Transverse colon (tissue), 4 donors: ENCODE measurements at regions of chr14 and their contacts with region 1.

Region 1: DNA sequence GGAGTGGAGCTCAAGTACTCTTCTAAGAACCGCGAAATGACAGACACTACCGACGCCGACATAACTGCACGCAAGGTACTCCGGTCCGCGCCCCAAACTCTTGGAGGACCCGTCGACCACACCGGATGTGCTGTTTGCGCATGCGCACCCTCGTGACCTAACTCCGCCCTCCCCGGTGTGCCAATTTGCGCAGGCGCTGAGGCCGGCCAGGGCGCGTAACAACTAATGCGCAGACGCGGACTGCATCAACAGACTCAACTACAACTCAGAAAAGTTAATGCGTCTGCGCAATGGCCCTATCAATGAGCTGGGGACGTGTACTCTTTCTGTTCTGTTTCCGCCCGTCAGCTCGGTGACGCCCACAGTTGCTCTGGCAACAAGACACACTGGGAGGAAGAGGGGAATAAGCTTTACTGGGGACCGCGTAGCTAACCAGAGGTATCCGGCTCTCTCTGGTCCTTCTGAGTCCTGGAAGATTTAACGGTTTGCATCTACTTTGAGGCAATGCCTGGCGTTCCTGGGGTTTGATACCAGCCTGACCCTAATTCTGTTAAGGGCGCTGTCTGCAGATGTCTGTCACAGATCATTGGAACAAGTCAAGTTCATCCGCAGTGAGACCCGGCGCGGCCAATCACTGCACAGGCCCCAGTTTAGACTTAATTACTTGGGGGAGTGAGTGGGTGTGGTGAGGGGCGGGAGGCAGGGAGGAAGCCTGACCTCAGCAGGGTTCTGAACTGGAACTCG is at the start of gene DAD1:
- DNase-seq: peak; percentile 99
- H3K4me3 ChIP-seq: peak within 1 kb of the TSS; percentile 70 to 85 (median 78)
- H3K27ac ChIP-seq: peak within 1 kb of the TSS; percentile 90 to 98 (median 92)
- H3K4me1 ChIP-seq: peaks cover 19 to 62% (median 35%) of the 10 kb centered on the region in 4 donors
- H3K27me3 ChIP-seq: no peaks in the 10 kb centered on the region
- CTCF ChIP-seq: no peak
- EP300 ChIP-seq: no peak
- POLR2A ChIP-seq: peak; percentile 93
- total RNA-seq, gene DAD1: 31.4 to 154 (median 141) TPM

Region 2: DNA sequence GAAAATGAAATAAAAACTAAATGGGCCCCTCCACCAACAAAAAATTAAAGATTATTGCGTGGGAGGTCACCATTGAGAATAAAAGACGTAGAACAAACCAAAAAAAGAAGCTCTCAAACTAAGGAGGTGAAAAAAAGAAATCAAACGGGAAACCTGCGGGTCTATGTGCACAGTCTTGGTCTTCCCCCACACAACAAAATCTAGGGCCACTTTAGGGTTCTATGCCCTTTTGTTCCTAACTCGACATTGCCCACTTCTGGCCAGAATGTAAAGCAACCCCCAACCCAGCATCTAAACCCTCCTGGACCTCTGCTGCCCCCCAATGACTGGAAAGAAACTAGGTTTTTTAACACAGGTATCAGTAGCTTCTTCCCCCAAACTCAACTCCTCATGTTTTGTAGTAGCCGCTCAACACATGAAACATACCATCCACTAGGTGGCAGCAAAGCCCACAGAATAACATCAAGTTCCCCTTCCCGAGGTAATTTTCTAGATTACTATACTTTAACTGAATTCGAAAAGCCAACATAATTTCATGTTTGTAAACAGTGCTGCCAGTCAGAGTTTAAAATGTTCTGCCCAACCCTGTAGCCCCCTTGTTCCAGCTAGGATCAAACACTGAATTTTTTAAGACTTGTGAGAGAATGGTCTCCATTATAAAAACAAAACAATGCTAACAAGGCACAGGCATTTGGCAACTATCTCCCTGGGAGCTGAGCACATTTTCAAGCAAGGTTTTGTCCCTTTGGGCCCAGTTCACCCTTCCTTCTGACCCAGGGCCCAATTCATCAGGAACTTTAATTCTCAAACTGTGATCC is 18.9 kb before region 1 on chr14:
- in situ Hi-C with region 1: no loop called
- intact Hi-C with region 1: no loop called
- DNase-seq: peak; percentile 81
- H3K4me3 ChIP-seq: no peak overlapping the region
- H3K27ac ChIP-seq: peak overlapping the region; percentile 58 to 63 (median 58)
- H3K4me1 ChIP-seq: peaks cover 5 to 32% (median 11%) of the 10 kb centered on the region in 4 donors
- H3K27me3 ChIP-seq: no peaks in the 10 kb centered on the region
- CTCF ChIP-seq: peak; percentile 74 to 97 (median 88)
- EP300 ChIP-seq: no peak
- POLR2A ChIP-seq: no peak

Region 3: GRCh38 chr14:22753586-22753985 is 164.3 kb after region 1 on chr14:
- in situ Hi-C with region 1: no loop called
- intact Hi-C with region 1: no loop called
- DNase-seq: no peak
- H3K4me3 ChIP-seq: no peak overlapping the region
- H3K27ac ChIP-seq: no peak overlapping the region
- H3K4me1 ChIP-seq: no peaks in the 10 kb centered on the region
- H3K27me3 ChIP-seq: no peaks in the 10 kb centered on the region
- CTCF ChIP-seq: no peak
- EP300 ChIP-seq: no peak
- POLR2A ChIP-seq: no peak

Region 4: DNA sequence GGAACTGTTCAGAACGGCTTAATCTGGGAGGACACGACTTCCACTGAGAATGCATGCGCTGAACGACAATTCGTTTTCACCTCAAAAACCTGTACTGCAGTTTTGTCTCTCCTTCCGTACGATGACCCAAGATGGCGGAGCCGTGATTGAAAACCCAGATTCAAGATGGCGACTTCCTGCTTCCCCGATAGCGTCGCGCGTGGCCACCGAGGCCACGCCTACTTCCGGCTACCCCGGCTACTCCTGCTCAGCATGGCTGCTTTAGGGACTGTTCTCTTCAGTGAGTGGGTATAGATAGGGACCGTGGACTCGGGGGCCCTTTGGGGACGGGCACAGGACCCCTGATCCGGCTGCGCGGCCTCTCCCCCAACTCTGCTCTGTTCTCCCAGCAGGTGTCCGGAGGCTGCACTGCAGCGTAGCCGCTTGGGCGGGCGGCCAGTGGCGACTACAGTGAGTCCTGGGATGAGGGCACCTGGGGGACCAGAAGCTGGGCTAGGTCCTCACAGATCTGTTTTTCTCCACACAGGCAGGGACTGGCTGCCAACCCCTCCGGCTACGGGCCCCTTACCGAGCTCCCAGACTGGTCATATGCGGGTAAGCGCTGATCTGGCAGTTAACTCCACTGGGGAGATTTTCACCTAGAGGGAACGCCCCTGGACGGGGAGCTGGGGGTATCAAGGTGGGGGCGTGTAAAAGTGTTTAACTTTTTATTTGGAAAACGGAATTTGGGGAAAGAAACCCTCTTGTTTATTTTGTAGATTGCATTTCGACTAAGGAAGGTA is 240.6 kb after region 1 on chr14 and contains the start of gene MRPL52:
- in situ Hi-C with region 1: loop called in 1 of 4 experiments (anchors 25 kb)
- intact Hi-C with region 1: no loop called
- DNase-seq: peak; percentile 93
- H3K4me3 ChIP-seq: peak within 1 kb of the TSS; percentile 62 to 81 (median 74)
- H3K27ac ChIP-seq: peak within 1 kb of the TSS; percentile 80 to 87 (median 82)
- H3K4me1 ChIP-seq: peaks cover 6 to 17% (median 7%) of the 10 kb centered on the region in 4 donors
- H3K27me3 ChIP-seq: no peaks in the 10 kb centered on the region
- CTCF ChIP-seq: no peak
- EP300 ChIP-seq: no peak
- POLR2A ChIP-seq: peak; percentile 45
- total RNA-seq, gene MRPL52: 7.5 to 44.3 (median 23.8) TPM in 3 of 4 donors, not detected in the other